Prostate gland (tissue), 2 donors: ENCODE measurements at regions of chr1 and their contacts with region 1.

Region 1: DNA sequence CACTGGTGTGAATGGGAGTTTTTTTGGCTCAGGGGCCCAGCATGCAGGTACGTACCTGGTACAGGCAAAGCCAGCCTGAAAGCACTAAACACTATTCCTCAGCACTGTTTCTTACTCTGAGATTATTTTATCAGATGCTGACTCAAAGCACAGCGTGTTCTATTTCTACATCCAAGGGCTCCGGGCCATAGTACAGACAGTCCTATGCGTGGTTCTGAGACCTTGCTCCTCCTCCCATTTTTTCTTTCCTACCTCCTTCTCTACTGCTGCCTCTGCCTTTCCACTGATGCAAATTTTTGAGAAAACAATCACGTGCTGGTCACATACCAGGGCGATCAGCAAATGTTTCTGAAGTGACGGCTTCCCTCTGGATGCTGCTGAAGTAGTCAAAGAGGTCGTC is 36.3 kb downstream of the PDPN start:
- DNase-seq: peak; percentile 28
- H3K4me3 ChIP-seq: no peak overlapping the region
- H3K27ac ChIP-seq: peak overlapping the region; percentile 62 to 79
- H3K4me1 ChIP-seq: no peaks in the 10 kb centered on the region
- H3K27me3 ChIP-seq: no peaks in the 10 kb centered on the region
- CTCF ChIP-seq: no peak
- POLR2A ChIP-seq: no peak

Region 2: GRCh38 chr1:13543451-13544220 is 76.3 kb before region 1 on chr1:
- intact Hi-C with region 1: loop called (anchors 5 kb)
- DNase-seq: peak; percentile 30
- H3K4me3 ChIP-seq: no peak overlapping the region
- H3K27ac ChIP-seq: no peak overlapping the region
- H3K4me1 ChIP-seq: no peaks in the 10 kb centered on the region
- H3K27me3 ChIP-seq: no peaks in the 10 kb centered on the region
- CTCF ChIP-seq: peak in 3 of 4 experiments; percentile 23 to 56 (median 45)
- POLR2A ChIP-seq: no peak

Region 3: DNA sequence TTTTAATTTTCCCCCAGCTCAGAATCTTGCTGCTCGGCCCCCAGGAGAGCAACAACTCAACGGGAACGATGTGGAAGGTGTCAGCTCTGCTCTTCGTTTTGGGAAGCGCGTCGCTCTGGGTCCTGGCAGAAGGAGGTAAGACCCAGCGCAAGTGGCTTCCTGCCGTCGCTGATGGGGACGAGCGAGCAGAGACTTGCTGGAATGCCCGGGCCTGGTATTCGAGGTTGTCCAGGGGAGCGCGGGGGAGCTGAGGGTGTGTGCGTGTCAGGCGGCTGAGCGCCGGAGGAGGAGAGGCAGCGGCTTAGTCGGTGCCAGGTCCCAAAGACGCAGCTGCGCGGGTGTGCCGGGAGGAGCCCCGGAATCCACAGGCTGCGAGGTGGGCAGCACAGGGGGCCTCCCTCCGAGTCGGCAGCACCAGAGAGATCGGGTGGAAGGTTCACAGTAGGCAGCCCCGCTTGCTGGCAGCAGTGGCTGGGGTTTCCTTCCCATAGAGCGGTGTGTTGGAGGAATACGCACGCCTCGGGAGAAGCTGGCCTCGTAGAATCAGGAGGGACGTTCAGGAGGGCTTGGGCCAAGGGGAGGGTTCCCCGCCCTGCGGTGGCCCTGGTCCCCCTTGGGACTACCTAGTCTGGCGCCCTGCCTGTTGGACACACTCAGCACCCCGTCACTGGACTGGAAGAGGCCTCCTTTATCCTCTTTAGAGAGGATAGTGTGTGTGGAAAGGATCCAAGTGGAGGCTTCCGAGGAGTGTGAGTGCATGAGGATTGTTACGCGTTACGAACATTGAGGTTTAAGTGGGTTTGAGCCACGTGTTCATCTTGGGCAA is 35.7 kb before region 1 on chr1:
- intact Hi-C with region 1: loop called (anchors 5 kb)
- DNase-seq: peak; percentile 59
- H3K4me3 ChIP-seq: peak overlapping the region; percentile 35 to 36
- H3K27ac ChIP-seq: peak overlapping the region; percentile 79 to 88
- H3K4me1 ChIP-seq: no peaks in the 10 kb centered on the region
- H3K27me3 ChIP-seq: peaks cover 13% of the 10 kb centered on the region
- CTCF ChIP-seq: no peak
- POLR2A ChIP-seq: peak; percentile 14

Region 4: DNA sequence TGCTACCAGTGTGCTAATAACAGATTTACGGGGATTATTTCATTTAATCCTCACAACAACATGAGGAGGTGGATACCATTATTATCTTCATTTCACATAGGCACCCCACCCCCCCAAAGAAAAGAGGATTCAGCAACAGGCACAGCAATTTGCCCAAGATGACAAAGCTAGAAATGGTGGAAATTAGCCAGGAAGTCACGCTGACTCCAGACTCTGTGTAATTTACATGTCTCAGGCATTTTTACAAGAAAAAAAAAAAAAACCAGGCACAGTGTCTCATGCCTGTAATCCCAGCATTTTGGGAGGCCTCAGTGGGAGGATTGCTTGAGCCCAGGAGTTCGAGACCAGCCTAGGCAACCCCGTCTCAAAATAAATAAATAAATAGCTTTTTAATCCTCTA is 42.6 kb after region 1 on chr1:
- intact Hi-C with region 1: loop called (anchors 5 kb)
- DNase-seq: peak; percentile 16
- H3K4me3 ChIP-seq: no peak overlapping the region
- H3K27ac ChIP-seq: no peak overlapping the region
- H3K4me1 ChIP-seq: no peaks in the 10 kb centered on the region
- H3K27me3 ChIP-seq: no peaks in the 10 kb centered on the region
- CTCF ChIP-seq: no peak
- POLR2A ChIP-seq: no peak

Region 5: GRCh38 chr1:13675151-13675651 is 55.3 kb after region 1 on chr1:
- intact Hi-C with region 1: no loop called
- DNase-seq: no peak
- H3K4me3 ChIP-seq: no peak overlapping the region
- H3K27ac ChIP-seq: no peak overlapping the region
- H3K4me1 ChIP-seq: no peaks in the 10 kb centered on the region
- H3K27me3 ChIP-seq: no peaks in the 10 kb centered on the region
- CTCF ChIP-seq: no peak
- POLR2A ChIP-seq: no peak